CD4-positive, alpha-beta T cell (primary cell): ENCODE measurements at regions of chr1 and their contacts with region 1.

Region 1: GRCh38 chr1:198534548-198535418 is 5.7 kb downstream of the ATP6V1G3 start:
- DNase-seq: no peak
- ATAC-seq: peak; percentile 48
- H3K4me3 ChIP-seq: peak overlapping the region; percentile 6
- H3K4me3 Mint-ChIP-seq: peak overlapping the region; percentile 64
- H3K27ac ChIP-seq: peak overlapping the region; percentile 14 to 74
- H3K27ac Mint-ChIP-seq: peak overlapping the region; percentile 90
- H3K4me1 ChIP-seq: peaks cover 12% of the 10 kb centered on the region
- H3K4me1 Mint-ChIP-seq: peaks cover 84% of the 10 kb centered on the region
- H3K27me3 ChIP-seq: no peaks in the 10 kb centered on the region
- H3K27me3 Mint-ChIP-seq: no peaks in the 10 kb centered on the region
- CTCF ChIP-seq: no peak

Region 2: GRCh38 chr1:198693321-198693720 is 158.5 kb after region 1 on chr1:
- CTCF ChIA-PET with region 1: no interaction called
- POLR2A ChIA-PET with region 1: interaction called, 3 read pairs
- intact Hi-C with region 1: loop called in 1 of 2 experiments (anchors 5 kb)
- DNase-seq: no peak
- ATAC-seq: peak; percentile 48
- H3K4me3 ChIP-seq: no peak overlapping the region
- H3K4me3 Mint-ChIP-seq: peak overlapping the region; percentile 70
- H3K27ac ChIP-seq: no peak overlapping the region
- H3K27ac Mint-ChIP-seq: peak overlapping the region; percentile 82
- H3K4me1 ChIP-seq: peaks cover 17% of the 10 kb centered on the region
- H3K4me1 Mint-ChIP-seq: peaks cover 88% of the 10 kb centered on the region
- H3K27me3 ChIP-seq: no peaks in the 10 kb centered on the region
- H3K27me3 Mint-ChIP-seq: no peaks in the 10 kb centered on the region
- CTCF ChIP-seq: no peak

Region 3: DNA sequence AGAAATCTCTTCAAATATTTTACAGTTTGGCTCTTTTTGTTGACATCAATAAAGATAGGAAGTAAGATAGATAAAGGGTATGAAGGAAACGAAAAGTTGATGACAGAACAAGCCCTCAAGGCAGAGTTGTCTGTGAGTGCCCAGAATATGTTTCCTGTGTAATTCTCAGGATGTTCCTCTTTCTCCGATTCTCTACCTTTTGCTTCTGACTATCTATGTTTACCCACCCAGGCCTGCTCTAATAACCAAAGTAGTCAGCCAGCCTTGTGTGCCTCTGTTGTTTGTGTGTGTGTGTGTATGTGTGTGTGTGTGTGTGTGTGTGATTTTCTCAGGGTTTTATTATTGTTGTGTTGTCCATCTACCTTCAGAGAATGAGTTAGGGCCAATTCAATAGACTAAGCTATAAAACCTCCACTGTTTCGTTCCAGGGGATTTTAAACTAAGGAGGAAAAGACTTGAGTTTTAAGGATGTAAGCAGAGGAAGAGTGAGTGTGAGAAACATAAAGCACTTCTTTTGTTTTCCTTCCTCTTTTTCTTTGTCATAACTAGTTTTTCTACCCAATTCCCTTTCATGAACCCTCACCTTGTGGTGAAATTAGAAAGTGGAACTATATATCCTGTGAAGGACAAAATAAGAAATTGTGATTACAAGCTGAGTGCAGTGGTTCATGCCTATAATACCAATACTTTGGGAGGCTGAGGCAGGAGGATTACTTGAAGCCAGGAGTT is 865.4 kb after region 1 on chr1:
- CTCF ChIA-PET with region 1: no interaction called
- POLR2A ChIA-PET with region 1: no interaction called
- intact Hi-C with region 1: no loop called
- DNase-seq: no peak
- ATAC-seq: no peak
- H3K4me3 ChIP-seq: no peak overlapping the region
- H3K4me3 Mint-ChIP-seq: no peak overlapping the region
- H3K27ac ChIP-seq: no peak overlapping the region
- H3K27ac Mint-ChIP-seq: no peak overlapping the region
- H3K4me1 ChIP-seq: no peaks in the 10 kb centered on the region
- H3K4me1 Mint-ChIP-seq: peaks cover 10% of the 10 kb centered on the region
- H3K27me3 ChIP-seq: no peaks in the 10 kb centered on the region
- H3K27me3 Mint-ChIP-seq: peaks cover 11% of the 10 kb centered on the region
- CTCF ChIP-seq: no peak